Activated CD8-positive, alpha-beta T cell treated with anti-CD3 and anti-CD28 coated beads for 36 hours (primary cell): ENCODE measurements at regions of chr6 and their contacts with region 1.

Region 1: DNA sequence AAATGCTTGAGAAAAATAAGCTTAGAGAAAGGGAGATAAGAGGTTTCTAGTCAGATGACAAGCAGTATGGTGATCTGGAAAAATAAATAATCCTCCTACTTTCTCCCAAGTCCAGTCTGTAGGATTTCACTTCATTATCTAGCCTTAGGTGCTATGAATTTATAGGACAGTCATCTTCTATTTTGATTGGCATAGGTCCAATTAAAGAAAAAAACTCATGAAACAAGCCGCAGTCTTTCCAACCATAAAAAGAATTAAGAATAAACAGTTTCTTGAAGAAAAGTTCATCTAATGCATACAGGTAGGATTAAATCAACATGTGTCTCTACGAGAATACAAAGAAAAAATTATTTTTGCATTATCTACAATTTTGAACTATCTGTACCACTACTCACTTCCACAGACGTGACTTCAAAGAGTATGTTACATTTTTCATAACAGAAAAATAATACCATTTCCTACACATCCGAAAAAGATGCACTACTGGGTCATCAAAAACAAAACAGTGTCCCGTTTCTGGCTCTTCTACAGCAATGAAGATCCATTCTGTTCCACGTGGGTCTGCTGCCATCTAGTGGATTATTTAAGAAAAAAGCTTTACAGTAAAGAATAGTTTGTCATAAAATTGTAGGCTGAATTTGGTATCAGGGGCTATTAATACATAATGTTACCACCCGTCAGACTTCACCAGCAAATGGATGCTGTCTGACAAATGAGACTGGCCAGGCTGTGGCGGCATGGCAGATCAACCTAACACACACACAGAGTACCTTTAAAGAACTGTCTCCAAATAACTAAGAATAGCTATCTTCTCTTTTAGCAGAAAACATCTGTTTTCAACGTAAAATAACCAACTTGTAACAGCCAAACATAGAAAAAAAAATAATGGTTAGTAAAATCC is 28.9 kb downstream of the STX7 start:
- DNase-seq: peak; percentile 59
- ATAC-seq: peak; percentile 67
- H3K4me3 Mint-ChIP-seq: no peak overlapping the region
- H3K27ac Mint-ChIP-seq: no peak overlapping the region
- H3K4me1 Mint-ChIP-seq: peaks cover 12% of the 10 kb centered on the region
- H3K27me3 Mint-ChIP-seq: no peaks in the 10 kb centered on the region
- CTCF ChIP-seq: peak; percentile 81

Region 2: DNA sequence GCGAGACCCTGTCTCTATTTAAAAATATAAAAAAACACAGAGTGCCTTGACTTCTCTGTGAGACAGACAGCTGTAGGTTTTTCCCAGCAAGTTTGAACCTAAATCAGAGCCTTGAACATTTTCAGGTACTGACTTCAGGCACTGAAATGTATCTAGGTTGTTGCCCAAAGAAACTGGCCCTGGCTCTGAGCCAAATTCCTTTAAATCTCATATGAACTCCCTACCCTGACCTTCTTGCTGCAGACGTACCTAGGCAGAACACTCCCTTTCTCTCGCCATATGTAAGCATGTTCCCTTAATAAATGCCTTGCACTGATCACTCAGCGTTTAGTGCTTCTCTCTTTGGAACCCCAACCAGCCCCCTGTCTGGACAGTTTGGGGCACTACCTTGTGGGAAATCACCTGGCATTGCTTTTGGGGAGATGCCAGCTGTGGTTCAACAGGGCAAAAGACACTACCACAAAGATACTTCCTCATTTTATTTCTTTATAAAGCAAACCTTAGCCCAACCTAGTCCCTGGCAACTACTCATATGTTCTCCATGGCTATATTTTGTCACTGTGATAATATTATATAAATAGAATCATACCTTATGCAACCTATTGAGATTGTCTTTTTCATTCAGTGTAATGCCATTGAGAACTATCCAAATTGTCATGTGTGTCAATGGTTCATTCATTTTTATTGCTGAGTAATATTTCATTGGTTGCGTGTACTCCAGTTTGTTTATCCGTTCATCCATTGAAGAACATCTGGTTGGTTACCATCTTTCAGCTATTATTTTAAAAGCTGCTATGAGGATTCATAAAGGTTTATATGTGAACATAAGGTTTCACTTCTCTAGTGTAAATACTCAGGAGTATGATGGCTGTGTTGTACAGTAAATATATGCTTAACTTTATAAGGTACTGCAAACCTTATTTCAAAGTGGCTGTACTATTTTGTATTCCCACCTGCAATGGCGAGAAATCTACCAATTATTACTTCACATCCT is 197.7 kb before region 1 on chr6:
- CTCF ChIA-PET with region 1: interaction called, 276 read pairs
- POLR2A ChIA-PET with region 1: no interaction called
- intact Hi-C with region 1: no loop called
- DNase-seq: no peak
- ATAC-seq: no peak
- H3K4me3 Mint-ChIP-seq: no peak overlapping the region
- H3K27ac Mint-ChIP-seq: no peak overlapping the region
- H3K4me1 Mint-ChIP-seq: no peaks in the 10 kb centered on the region
- H3K27me3 Mint-ChIP-seq: peaks cover 11% of the 10 kb centered on the region
- CTCF ChIP-seq: no peak

Region 3: GRCh38 chr6:132465530-132466485 is 18.2 kb before region 1 on chr6:
- CTCF ChIA-PET with region 1: interaction called, 25 read pairs
- POLR2A ChIA-PET with region 1: no interaction called
- intact Hi-C with region 1: no loop called
- DNase-seq: no peak
- ATAC-seq: peak; percentile 58
- H3K4me3 Mint-ChIP-seq: no peak overlapping the region
- H3K27ac Mint-ChIP-seq: no peak overlapping the region
- H3K4me1 Mint-ChIP-seq: no peaks in the 10 kb centered on the region
- H3K27me3 Mint-ChIP-seq: no peaks in the 10 kb centered on the region
- CTCF ChIP-seq: no peak

Region 4: DNA sequence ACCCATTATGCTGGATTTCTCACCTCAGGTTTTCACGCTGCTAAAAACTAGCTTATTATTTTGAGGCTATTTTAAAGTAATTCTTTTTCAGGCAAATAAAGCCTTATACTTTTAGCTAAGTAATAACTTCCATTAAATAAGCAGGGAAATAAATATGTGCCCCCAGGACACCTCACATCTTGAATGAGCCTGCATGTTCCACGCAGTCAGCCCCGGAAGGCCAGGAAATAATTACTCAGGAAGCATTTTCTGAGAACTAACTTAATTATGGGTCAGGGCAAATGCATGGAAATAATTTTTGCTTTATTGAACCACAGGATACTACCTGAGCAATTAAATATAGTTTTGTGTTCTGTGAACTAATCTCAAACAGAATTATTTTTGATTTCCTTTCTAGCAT is 12.2 kb before region 1 on chr6:
- CTCF ChIA-PET with region 1: interaction called, 25 read pairs
- POLR2A ChIA-PET with region 1: interaction called, 3 read pairs
- intact Hi-C with region 1: no loop called
- DNase-seq: no peak
- ATAC-seq: no peak
- H3K4me3 Mint-ChIP-seq: no peak overlapping the region
- H3K27ac Mint-ChIP-seq: no peak overlapping the region
- H3K4me1 Mint-ChIP-seq: no peaks in the 10 kb centered on the region
- H3K27me3 Mint-ChIP-seq: no peaks in the 10 kb centered on the region
- CTCF ChIP-seq: no peak